Cardiac septum (tissue), 1 donor: ENCODE measurements at regions of chr3 and their contacts with region 1.

Region 1: DNA sequence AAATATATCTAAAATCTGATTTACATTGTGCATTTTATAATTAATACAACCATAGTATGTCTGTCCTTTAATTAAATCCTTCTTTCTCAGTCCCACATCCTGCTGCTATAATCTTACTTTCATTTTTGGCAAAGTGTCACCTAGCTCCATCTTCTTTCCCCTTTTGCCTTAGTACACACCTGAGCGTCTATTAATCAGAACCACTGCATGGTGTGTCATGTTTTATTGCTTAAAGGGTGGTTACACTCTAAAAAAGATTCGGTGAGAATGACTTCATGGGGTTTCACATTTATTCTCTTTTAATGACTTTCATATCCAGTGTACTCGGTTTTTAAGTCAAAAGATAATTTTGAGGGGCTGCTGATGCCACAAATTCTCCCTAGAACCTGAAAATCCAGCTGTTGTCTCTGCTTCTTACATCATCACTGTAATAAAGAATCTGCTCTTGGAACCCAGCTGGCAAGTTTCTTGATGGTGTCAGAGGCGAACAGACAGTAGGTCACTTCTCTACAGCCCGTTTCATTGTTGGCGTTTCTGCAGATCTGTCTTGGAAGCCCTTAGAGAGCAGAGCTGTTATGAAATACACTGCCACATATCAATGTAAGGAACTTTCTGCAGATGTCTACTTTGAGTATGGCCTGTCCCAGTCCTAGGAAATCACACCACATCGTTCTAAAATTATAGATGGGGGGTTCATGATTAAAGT is 99.7 kb downstream of the TIGIT start:
- DNase-seq: no peak

Region 2: DNA sequence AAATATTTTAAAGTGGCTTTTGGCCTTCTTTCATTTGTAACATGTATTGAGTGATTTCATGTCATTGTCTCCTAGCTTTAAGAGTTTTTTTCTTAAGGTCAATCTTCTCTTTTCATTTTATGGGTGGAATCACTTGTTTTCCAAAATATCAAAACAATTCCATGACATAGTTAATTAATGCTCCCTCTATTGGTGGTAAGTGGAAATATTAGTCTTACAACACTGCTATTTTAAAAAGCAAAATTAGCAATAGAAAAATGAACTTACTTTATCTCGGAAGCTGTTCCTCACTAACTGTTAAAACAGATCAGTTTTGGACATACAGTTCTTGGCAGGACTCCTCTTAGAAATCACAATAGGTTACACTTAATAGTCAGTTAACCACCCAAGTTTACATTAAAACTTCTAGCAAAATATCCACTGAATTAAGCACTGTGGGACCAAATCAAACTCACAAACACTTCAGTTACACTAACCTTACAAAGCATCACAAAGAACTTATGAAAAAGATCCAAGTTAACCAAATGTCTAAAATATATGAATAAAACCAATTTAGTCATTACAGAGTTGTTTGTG is 57.3 kb before region 1 on chr3:
- intact Hi-C with region 1: no loop called
- DNase-seq: no peak

Region 3: DNA sequence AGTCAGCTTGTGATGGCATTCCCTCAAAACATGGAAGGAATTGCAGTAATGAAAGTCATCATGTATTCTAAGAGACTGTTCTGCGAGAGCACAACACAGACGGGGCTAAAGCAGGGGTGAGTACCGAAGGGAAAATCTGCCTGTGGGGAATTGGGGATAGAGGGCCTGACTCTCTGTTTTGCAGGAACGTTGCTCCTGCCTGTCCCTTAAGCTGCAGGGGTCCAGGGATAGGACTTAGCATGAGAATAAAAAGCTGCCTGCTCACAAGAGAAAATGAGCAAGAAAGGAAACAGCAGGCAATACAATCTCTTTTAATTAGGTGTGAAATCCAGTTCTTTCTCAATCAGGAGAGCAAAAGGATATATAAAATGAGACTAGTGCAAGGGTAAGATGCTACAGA is 37.5 kb before region 1 on chr3:
- intact Hi-C with region 1: no loop called
- DNase-seq: no peak

Region 4: GRCh38 chr3:114456742-114457141 is 63.2 kb after region 1 on chr3:
- intact Hi-C with region 1: no loop called
- DNase-seq: no peak

Region 5: DNA sequence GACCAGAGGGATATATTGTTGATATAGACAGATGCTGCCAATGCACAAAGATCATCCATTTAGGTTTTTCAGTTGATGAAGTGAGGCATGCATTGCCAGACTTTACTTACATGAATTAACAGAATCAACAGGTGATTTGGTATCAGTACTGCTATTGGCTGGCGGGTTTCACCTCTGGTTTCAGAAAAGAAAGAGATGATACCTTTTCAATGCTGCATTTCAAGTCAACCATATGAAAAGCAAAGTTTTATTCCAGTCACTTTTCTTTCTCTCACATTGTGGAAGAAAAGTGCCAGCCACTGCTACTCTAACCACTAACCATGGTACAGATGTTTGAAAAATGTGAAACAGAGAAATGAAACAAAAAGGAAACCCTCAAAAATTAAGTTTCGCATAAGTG is 189.4 kb after region 1 on chr3:
- intact Hi-C with region 1: loop called (anchors 5 kb)
- DNase-seq: no peak